ENCODE measurements at regions of chr19 and their contacts with region 1.

Region 1: GRCh38 chr19:58558623-58559274 is 338 bp upstream of the UBE2M start:
- DNase-seq: peak; percentile 100
- ATAC-seq: peak; percentile 52
- H3K4me3 ChIP-seq: peak overlapping the region; percentile 69
- H3K27ac ChIP-seq: peak overlapping the region; percentile 85
- H3K4me1 ChIP-seq: peaks cover 57% of the 10 kb centered on the region
- H3K27me3 ChIP-seq: no peaks in the 10 kb centered on the region
- CTCF ChIP-seq: no peak

Region 2: GRCh38 chr19:58428617-58429016 is 130.1 kb before region 1 on chr19:
- CTCF ChIA-PET with region 1: no interaction called
- POLR2A ChIA-PET with region 1: no interaction called
- intact Hi-C with region 1: no loop called
- DNase-seq: no peak
- ATAC-seq: no peak
- H3K4me3 ChIP-seq: no peak overlapping the region
- H3K27ac ChIP-seq: no peak overlapping the region
- H3K4me1 ChIP-seq: no peaks in the 10 kb centered on the region
- H3K27me3 ChIP-seq: no peaks in the 10 kb centered on the region
- CTCF ChIP-seq: no peak

Region 3: GRCh38 chr19:58499021-58499927 is 59.5 kb before region 1 on chr19:
- CTCF ChIA-PET with region 1: no interaction called
- POLR2A ChIA-PET with region 1: no interaction called
- intact Hi-C with region 1: loop called (anchors 1 kb)
- DNase-seq: peak; percentile 100
- ATAC-seq: peak; percentile 98
- H3K4me3 ChIP-seq: peak overlapping the region; percentile 69
- H3K27ac ChIP-seq: peak overlapping the region; percentile 29
- H3K4me1 ChIP-seq: peaks cover 21% of the 10 kb centered on the region
- H3K27me3 ChIP-seq: no peaks in the 10 kb centered on the region
- CTCF ChIP-seq: 0 out of 2 replicates have a peak, but pooled peaks have one; percentile 28

Region 4: DNA sequence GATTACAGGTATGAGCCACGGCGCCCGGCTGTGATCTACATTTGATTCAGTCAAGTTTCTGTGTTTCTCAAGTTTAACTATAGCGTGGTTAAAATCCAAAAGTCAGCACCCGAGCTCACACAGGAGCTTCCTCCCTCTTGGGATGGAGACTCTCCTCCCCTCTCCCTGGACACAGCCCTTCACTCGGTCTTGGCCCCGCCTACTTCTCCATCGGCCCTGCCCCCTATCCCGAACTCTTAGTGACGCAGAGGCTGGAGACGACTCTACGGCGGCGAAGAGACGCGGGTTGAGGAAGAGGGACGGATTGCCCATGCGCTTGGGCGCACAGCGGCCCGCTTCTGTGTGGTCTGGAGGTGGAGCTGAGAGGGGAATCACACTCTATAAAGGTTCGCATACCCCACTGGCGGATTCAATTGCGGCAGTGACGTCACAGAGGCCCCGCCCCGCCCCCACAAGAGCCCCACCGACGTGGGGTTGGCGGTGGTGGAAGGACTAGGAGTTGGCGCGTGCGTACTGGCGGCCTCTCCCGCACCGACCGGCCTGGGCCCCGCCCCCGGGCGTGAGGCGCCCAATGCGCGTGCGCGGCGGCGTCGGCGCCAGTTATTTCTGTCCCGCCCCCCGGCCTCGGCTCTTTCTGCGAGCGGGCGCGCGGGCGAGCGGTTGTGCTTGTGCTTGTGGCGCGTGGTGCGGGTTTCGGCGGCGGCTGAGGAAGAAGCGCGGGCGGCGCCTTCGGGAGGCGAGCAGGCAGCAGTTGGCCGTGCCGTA is 14.7 kb before region 1 on chr19 and contains the start of gene TRIM28:
- CTCF ChIA-PET with region 1: no interaction called
- POLR2A ChIA-PET with region 1: interaction called, 14 read pairs
- intact Hi-C with region 1: loop called (anchors 1 kb)
- DNase-seq: peak; percentile 99
- ATAC-seq: peak; percentile 96
- H3K4me3 ChIP-seq: peak within 1 kb of the TSS; percentile 92
- H3K27ac ChIP-seq: peak within 1 kb of the TSS; percentile 88
- H3K4me1 ChIP-seq: peaks cover 13% of the 10 kb centered on the region
- H3K27me3 ChIP-seq: no peaks in the 10 kb centered on the region
- CTCF ChIP-seq: no peak
- total RNA-seq, gene TRIM28: 1,169 and 1,653 TPM in 2 replicates

Region 5: DNA sequence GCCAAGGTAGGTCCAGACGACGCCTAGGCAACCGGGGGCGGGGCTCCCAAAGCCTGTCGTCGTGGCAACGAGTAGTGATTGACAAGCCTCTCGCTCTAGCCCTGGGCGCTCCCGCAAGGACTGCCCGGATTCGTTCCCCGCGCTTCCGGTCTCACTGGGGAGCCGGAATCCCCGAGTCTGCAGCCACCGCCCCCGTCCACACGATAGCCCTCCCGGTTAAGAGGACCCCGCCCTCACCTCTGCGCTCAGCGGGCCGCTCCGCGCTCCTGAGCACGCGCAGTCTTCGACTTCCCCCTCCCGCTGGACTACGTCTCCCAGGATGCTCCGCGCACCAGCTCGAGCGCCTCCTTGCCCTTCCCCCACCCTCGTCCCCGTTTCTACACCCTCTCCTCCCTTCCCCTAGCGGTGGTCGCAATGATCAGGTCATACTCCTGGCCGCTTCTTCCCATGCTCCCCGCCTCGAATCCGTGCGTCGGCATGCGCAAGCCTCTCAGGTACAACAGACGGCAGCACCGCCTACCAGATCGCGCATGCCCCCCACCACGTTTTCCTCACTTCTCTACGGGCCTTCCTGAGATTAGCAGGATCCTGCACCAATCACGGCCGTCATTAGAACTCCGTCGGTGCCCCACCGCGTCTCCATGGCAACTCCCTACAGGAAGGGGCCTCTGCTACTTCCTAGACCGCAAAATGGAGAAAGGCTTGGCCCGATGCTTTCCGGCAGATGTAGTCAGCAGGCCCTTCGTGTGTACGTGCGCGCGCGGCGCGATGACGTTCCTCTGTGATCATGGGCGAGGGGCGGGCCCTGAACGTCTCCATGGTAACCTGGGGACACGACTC is 14.3 kb after region 1 on chr19 and contains the start of gene MZF1:
- CTCF ChIA-PET with region 1: no interaction called
- POLR2A ChIA-PET with region 1: interaction called, 3 read pairs
- intact Hi-C with region 1: loop called (anchors 2 kb)
- DNase-seq: peak; percentile 100
- ATAC-seq: peak; percentile 69
- H3K4me3 ChIP-seq: peak within 1 kb of the TSS; percentile 76
- H3K27ac ChIP-seq: peak within 1 kb of the TSS; percentile 91
- H3K4me1 ChIP-seq: peaks cover 23% of the 10 kb centered on the region
- H3K27me3 ChIP-seq: no peaks in the 10 kb centered on the region
- CTCF ChIP-seq: no peak
- total RNA-seq, gene MZF1: 18.0 and 29.3 TPM in 2 replicates

Measured in PC-3 (cell line).